ENCODE measurements at regions of chrX and their contacts with region 1.

Region 1: DNA sequence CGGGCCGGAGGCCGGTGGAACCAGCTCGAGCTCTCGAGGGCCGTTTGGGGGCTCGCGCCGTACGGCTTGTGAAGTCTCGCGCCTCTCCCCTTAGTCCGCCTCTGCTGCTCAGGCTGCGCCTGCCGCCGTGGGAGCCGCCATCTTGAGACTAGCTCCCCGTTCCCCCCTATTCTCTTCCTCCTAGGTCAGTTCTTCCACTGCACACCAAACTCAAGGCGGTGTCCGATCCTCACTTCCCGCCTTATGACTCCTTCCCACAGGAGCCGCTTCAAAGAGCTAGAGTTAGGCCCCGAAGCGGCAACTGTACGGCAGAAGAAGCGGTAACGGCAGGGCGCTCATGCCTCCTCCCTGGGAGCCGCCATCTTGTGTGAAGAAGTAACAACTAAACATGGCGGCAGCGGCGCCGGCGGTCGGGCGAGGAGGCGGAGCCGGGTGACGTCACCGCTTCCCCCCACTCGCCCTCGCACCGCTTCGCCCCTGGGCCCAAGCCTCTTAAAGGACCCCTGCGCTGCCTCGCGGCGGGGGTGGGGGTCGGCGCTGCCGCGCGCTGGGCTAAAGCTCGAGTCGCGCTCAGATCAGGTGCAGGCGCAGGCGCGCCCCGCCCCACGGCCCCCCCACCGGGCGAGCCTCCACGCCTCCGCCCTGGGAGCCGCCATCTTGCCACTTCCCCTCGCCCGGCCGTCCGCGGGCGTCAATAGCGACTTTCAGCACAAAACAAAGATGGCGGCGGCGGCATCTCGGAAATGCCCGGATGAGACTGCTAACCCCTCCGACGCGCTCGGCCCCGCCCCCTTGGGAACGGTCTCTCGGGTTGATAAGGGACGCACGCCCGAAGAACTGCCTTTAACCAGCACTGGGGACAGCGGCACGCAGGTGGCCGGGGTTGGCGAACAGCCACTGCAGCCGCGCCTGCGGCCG is at the start of gene HCFC1:
- DNase-seq: peak; percentile 81 to 89
- ATAC-seq: peak; percentile 56 to 63
- H3K4me3 ChIP-seq: peak within 1 kb of the TSS; percentile 73 to 94 (median 85)
- H3K27ac ChIP-seq: peak within 1 kb of the TSS; percentile 95 to 100 (median 98)
- H3K4me1 ChIP-seq: peaks cover 35 to 48% of the 10 kb centered on the region in 2 donors
- H3K27me3 ChIP-seq: no peaks in the 10 kb centered on the region
- CTCF ChIP-seq: no peak
- POLR2A ChIP-seq: peak; percentile 20 to 57
- total RNA-seq, gene HCFC1: 15.9 to 56.4 (median 51.8) TPM

Region 2: DNA sequence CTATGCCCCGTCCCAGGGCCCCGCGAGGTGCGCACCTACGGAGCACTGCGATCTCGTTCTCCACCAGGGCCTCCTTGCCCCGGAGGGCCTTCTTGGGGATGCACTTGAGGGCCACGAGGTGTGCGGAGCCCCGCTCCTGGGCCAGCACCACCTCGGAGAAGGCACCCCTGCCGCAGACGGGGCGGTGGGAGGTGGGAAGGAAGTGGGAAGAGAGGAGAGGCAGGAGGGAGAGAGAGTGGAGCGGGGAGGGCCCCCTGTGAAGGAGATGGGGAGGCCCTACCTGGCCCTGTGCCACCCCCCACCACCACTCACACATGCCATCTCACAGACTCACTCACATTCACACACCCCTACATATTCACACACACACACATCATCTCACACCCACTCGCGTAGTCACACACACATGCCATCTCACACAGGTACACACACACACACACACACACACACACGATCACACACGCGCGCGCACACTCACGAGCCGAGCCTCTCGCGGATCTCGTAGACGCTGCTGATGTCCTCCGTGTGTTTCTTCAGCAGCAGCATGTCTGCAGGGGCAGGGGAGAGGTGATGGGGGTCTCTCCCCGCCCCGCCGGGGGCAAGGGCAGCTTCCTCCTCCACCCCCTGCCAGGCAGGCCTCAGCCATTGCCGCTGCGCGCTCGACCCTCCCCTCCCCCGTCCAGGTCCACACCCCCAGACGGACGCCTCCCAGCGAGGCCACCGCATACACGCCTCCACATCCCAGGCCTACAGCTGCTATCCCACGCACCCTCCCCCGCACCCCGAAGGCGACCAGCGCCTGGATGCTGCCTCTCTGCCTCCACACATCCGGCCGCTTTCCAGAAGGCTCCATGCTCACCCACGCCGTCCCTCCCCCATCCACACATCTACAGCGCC is 298.9 kb before region 1 on chrX:
- in situ Hi-C with region 1: no loop called
- intact Hi-C with region 1: no loop called
- DNase-seq: no peak
- ATAC-seq: no peak
- H3K4me3 ChIP-seq: no peak overlapping the region
- H3K27ac ChIP-seq: no peak overlapping the region
- H3K4me1 ChIP-seq: peaks cover 0 to 3% of the 10 kb centered on the region in 2 donors
- H3K27me3 ChIP-seq: peaks cover 0 to 12% (median 11%) of the 10 kb centered on the region in 3 donors
- CTCF ChIP-seq: no peak
- POLR2A ChIP-seq: no peak

Region 3: DNA sequence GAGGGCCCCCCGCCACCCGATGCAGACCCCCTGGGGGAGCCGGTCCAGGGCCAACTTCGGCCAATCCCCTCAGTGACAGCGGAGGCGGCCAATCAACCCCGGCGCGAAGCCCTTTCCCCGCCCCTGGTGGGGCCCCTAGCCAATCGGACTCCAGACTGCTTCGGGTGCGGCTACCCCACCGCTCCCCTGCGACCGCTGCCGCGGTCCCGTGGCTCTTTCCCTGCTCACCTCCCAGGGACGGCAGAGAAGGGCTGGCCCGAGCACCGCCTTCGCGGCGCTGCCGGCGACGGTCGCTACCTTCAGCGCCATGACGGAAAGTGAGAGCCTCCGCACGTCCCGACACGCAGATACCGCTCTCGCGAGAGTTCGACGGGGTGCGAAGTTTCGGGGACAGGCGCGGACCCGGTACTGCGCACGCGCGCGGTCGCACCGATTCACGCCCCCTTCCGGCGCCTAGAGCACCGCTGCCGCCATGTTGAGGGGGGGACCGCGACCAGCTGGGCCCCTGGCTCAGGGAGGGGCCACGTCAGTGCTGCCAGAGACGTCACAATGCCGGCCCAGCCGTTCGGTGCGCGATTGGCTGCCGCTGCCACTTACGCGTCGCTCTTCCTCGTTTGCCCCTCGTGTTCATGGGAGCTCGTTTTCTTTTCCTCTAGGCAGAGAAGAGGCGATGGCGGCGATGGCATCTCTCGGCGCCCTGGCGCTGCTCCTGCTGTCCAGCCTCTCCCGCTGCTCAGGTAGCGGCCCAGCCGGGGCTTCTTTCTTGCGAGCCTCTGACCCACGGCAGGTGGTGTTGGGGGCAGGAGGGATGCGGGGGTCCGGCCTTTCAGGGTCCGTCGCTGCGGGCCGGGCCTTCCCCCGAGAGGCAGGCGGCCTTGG is 177.5 kb before region 1 on chrX and contains the starts of genes IDH3G and SSR4:
- in situ Hi-C with region 1: loop called in 2 of 4 experiments (anchors 25 kb)
- intact Hi-C with region 1: loop called (anchors 5 kb)
- DNase-seq: peak; percentile 82 to 90
- ATAC-seq: peak; percentile 86 to 89
- H3K4me3 ChIP-seq: peak within 1 kb of the TSS; percentile 73 to 88 (median 78)
- H3K27ac ChIP-seq: peak within 1 kb of the TSS; percentile 93 to 98 (median 96)
- H3K4me1 ChIP-seq: peaks cover 6 to 16% of the 10 kb centered on the region in 2 donors
- H3K27me3 ChIP-seq: no peaks in the 10 kb centered on the region
- CTCF ChIP-seq: no peak
- POLR2A ChIP-seq: peak; percentile 60 to 74
- total RNA-seq, gene IDH3G: 79.8 to 92.7 (median 86.4) TPM
- total RNA-seq, gene SSR4: 73.9 to 111 (median 93.4) TPM

Region 4: GRCh38 chrX:154013614-154014360 is 42.1 kb after region 1 on chrX:
- in situ Hi-C with region 1: no loop called
- intact Hi-C with region 1: no loop called
- DNase-seq: no peak
- ATAC-seq: no peak
- H3K4me3 ChIP-seq: no peak overlapping the region
- H3K27ac ChIP-seq: no peak overlapping the region
- H3K4me1 ChIP-seq: peaks cover 5 to 6% of the 10 kb centered on the region in 2 donors
- H3K27me3 ChIP-seq: no peaks in the 10 kb centered on the region
- CTCF ChIP-seq: peak; percentile 63 to 91 (median 87)
- POLR2A ChIP-seq: no peak

Region 5: GRCh38 chrX:154046031-154046781 is 74.5 kb after region 1 on chrX:
- in situ Hi-C with region 1: loop called in 1 of 4 experiments (anchors 25 kb)
- intact Hi-C with region 1: loop called (anchors 2 kb)
- DNase-seq: peak; percentile 23 to 31
- ATAC-seq: peak; percentile 15 to 48
- H3K4me3 ChIP-seq: no peak overlapping the region
- H3K27ac ChIP-seq: peak overlapping the region; percentile 82 to 89 (median 88)
- H3K4me1 ChIP-seq: peaks cover 76 to 85% of the 10 kb centered on the region in 2 donors
- H3K27me3 ChIP-seq: no peaks in the 10 kb centered on the region
- CTCF ChIP-seq: no peak
- POLR2A ChIP-seq: no peak

Region 6: DNA sequence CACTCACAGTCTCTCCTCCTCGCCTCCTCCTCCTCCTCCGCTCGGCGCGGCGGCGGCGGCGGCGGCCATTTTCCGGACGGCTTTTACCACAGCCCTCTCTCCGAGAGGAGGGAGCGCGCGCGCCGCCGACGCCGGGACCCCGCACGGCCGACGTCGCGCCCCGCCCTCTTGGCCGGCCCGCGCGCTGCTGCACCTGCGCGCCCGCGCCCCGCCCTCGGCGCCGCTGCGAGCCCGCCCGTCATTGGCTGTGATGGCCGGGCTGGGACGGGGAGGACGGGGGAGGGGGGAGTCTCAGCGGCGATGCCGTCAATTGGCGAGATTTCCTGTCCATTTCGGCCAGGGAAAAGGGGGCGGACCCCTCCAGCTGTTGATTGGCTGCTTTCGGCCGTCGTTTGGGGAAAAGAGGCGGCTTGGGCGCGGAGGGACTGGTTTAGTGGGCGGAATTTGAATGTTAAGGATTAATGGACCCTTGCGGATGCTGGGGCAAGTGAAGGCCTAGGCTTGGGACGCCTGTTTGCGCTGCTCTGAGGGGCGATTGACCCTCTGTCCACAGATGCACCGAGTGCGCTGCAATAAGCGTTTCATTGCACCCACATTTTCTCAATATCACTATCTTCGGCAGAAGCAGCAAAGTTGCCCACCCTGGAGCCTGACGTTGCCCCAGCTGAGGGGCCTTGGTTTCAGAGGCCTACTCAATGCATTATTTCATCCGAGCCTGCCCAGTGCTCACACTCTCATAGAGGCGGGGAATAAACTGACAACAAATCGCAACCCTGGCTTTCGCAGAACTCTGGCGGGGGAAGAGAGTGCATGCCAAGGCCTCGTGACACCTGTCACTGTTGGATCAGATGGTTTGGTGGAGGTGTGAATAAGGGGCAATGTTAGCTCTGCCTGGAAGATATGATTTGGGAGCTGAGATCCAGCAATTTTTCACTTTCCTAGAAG is 126.2 kb after region 1 on chrX and contains the start of gene MECP2:
- in situ Hi-C with region 1: no loop called
- intact Hi-C with region 1: loop called (anchors 1 kb)
- DNase-seq: peak; percentile 86 to 91
- ATAC-seq: peak; percentile 80 to 86
- H3K4me3 ChIP-seq: peak within 1 kb of the TSS; percentile 62 to 72 (median 68)
- H3K27ac ChIP-seq: peak within 1 kb of the TSS; percentile 90 to 99 (median 94)
- H3K4me1 ChIP-seq: peaks cover 31 to 39% of the 10 kb centered on the region in 2 donors
- H3K27me3 ChIP-seq: no peaks in the 10 kb centered on the region
- CTCF ChIP-seq: no peak
- POLR2A ChIP-seq: peak; percentile 52 to 60
- total RNA-seq, gene MECP2: 39.0 to 63.2 (median 45.2) TPM

Region 7: DNA sequence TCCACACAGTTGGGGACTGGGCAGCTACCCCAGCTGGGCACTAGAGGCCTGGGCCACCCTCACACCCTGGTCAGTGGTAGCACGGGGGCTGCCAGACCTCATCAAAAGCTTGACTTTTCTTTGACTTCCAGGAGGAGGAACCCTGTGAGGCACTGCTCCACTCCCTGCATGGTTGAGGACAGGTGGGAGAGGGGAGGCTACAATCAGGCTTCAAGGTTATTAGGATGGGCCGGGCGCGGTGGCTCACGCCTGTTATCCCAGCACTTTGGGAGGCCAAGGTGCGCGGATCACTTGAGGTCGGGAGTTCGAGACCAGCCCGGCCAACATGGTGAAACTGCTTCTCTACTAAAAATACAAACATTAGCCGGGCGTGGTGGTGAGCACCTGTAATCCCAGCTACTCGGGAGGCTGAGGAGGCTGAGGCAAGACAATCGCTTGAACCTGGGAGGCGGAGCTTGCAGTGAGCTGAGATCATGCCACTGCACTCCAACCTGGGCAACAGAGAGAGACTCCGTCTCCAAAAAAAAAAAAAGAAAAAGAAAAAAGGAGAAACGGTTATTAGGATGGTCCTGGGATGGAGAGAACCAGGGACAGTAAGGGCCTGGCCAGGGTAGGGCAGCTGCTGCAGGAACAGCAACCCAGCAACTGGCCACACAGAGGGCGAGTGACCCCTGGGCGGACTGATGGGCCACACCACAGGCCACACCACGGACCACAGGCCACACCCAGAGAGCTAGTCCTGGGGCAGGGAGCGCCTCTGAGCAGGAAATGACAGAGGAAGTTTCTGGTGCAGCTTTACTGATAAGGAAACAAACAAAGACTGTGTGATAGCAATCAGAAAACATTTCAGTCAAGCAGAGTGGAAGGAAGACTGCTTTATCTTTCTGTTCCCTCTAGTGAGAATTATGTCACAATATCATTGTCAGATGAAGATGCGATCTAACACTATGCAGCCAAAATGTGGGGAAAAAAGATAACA is 151.8 kb after region 1 on chrX:
- in situ Hi-C with region 1: no loop called
- intact Hi-C with region 1: no loop called
- DNase-seq: no peak
- ATAC-seq: peak in 1 of 2 donors; percentile 33
- H3K4me3 ChIP-seq: no peak overlapping the region
- H3K27ac ChIP-seq: no peak overlapping the region
- H3K4me1 ChIP-seq: no peaks in the 10 kb centered on the region
- H3K27me3 ChIP-seq: no peaks in the 10 kb centered on the region
- CTCF ChIP-seq: no peak
- POLR2A ChIP-seq: no peak

Region 8: DNA sequence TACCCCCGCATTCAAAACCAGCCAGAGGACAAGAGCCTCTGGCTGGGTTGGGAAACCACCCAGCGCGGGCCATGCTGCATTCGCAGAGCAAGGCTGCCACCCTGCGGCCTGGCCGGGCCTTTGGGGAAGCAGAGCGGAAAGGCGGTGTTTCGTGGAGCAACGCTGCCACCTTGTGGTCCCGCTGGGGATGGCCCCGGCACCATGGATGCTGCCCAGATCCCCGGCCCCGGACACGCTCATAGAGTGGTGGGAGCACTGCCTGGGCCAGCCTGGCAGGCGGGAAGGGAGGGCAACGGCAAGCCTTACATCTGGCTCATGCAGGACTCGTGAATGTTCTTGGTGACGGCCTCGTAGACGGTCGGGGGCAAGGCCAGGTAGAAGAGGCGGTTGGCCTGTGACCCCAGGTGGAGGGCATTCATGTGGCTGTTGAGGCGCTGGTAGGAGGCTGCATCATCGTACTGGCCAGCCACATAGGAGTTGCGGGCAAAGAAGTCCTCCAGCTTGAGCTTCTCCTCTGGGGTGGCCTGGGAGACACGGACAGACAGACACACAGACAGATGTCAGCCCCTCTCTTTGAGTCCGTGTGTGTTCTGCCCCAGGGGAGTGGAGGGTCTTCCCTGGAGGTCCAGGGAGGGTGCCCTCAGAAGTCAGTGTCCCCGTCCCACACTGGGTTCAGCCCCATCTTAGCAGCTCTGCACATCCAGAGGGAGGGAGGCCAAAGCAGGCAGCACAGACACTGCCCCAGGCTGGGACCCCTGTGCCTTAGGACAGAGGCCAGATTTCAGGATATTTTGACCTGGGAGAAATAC is 563.4 kb after region 1 on chrX:
- in situ Hi-C with region 1: loop called in 1 of 4 experiments (anchors 25 kb)
- intact Hi-C with region 1: no loop called
- DNase-seq: peak; percentile 60 to 80
- ATAC-seq: peak; percentile 94 to 97
- H3K4me3 ChIP-seq: no peak overlapping the region
- H3K27ac ChIP-seq: peak overlapping the region in 3 of 4 donors; percentile 19 to 64 (median 64)
- H3K4me1 ChIP-seq: peaks cover 0 to 8% of the 10 kb centered on the region in 2 donors
- H3K27me3 ChIP-seq: no peaks in the 10 kb centered on the region
- CTCF ChIP-seq: peak; percentile 94 to 99 (median 98)
- POLR2A ChIP-seq: no peak